ENCODE measurements at regions of chr21 and their contacts with region 1.

Region 1: DNA sequence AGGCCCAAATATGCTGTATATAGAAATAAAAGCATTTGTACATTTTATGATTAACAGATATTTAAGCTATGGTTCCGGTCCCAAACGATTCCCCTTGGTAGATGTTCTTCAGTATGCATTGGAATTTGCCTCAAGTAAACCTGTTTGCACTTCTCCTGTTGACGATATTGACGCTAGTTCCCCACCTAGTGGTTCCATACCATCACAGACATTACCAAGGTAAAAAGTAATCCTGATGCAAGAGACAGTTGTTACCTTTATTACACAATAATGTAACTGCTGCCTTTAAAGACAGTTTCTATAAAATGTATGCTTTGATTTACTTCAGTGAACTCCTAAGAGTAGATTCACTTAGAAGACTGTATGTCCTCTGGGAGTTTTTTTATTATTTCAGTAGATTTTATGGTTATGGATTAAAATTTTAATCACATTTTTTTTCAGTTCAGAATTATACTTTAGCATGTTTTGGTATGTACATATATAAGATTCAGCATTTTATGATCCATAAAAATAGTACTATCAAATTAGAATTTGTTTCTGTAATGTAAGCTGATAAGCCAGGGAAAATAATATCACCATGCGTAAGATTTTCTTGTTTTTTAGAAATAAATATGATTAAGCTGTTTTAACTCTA is 96.5 kb downstream of the USP25 start:
- DNase-seq: peak; percentile 51
- ATAC-seq: peak; percentile 76
- H3K4me3 ChIP-seq: no peak overlapping the region
- H3K27ac ChIP-seq: no peak overlapping the region
- H3K4me1 ChIP-seq: no peaks in the 10 kb centered on the region
- H3K27me3 ChIP-seq: no peaks in the 10 kb centered on the region
- CTCF ChIP-seq: peak; percentile 10 to 68 (median 65); a peak in 5 of 6 replicates
- POLR2A ChIP-seq: no peak
- RAD21 ChIP-seq: peak; percentile 56

Region 2: GRCh38 chr21:15651172-15651571 is 175.1 kb before region 1 on chr21:
- CTCF ChIA-PET with region 1: no interaction called
- POLR2A ChIA-PET with region 1: no interaction called
- RAD21 ChIA-PET with region 1: no interaction called
- intact Hi-C with region 1: no loop called
- DNase-seq: no peak
- ATAC-seq: no peak
- H3K4me3 ChIP-seq: no peak overlapping the region
- H3K27ac ChIP-seq: no peak overlapping the region
- H3K4me1 ChIP-seq: no peaks in the 10 kb centered on the region
- H3K27me3 ChIP-seq: no peaks in the 10 kb centered on the region
- CTCF ChIP-seq: no peak
- POLR2A ChIP-seq: no peak
- RAD21 ChIP-seq: no peak

Region 3: DNA sequence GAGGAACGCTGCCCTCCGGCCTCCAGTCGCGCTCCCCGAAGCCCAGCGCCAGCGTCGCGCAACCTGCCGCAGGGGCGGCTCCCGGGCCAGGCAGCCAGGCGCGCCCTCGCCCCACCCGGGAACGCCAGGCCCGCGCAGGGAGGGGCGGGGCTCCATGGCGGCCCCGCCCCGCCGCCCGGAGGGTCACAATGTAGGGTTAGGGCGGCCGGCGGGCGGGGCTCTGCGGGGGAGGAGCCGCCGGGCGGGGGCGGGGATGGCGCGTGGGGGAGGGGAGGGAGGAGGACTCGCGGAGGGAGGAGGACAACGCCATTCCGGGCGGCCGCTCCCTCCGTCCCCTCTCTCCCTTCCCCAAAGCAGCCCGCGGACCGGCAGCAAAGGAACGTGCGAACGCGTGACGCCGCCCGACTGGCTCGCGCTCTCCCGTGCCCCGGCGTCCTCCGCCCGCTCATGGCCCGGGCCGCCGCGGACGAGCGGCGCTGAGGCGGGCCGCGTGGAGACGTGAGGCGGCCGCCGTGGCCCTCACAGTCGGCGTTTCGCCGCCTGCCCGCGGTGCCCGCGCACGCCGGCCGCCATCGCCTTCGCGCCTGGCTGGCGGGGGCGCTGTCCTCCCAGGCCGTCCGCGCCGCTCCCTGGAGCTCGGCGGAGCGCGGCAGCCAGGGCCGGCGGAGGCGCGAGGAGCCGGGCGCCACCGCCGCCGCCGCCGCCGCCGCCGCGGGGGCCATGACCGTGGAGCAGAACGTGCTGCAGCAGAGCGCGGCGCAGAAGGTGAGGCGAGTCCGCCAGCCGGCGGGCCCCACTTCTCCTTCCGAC is 96.4 kb before region 1 on chr21 and contains the start of gene USP25:
- CTCF ChIA-PET with region 1: no interaction called
- POLR2A ChIA-PET with region 1: no interaction called
- RAD21 ChIA-PET with region 1: no interaction called
- intact Hi-C with region 1: loop called (anchors 10 kb)
- DNase-seq: peak; percentile 43
- ATAC-seq: peak; percentile 95
- H3K4me3 ChIP-seq: peak within 1 kb of the TSS; percentile 59 to 76
- H3K27ac ChIP-seq: peak within 1 kb of the TSS; percentile 94
- H3K4me1 ChIP-seq: peaks cover 27 to 28% of the 10 kb centered on the region in 2 experiments
- H3K27me3 ChIP-seq: no peaks in the 10 kb centered on the region
- CTCF ChIP-seq: no peak
- POLR2A ChIP-seq: peak; percentile 78
- RAD21 ChIP-seq: no peak
- total RNA-seq, gene USP25: 33.6 TPM

Region 4: DNA sequence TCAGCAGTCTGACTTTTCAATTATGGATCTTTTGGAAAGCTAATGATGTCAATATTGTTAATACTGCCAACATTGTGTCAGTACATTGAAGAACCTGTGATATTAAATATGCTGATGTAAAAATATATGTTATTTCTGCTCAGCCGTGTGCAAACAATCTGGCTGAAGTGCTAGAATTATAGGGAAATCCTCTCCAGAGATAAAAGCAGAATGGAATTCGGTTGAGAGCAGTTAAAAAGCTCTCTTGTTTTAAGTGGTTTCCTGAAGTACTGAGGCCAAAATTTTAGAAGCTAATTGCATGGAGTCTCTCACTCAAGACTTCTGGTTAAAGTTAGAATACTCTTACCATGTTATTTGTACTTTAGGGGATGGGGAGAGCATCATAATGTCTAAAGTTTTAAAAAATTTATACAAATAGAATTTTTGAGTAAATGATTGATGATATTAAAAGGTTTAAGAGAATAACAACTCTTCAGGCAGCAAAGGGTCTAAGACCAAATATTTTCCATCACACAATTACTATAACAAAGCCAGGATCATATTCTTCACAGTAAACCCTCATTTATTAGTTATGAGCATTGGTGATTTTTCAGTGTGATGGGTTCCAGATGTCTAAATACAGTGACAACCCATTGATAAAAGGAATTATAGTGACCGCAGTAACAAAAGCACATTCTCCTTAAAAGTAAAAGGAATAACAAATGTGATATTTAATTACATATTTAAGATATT is 852.3 kb after region 1 on chr21:
- CTCF ChIA-PET with region 1: no interaction called
- POLR2A ChIA-PET with region 1: no interaction called
- RAD21 ChIA-PET with region 1: no interaction called
- intact Hi-C with region 1: no loop called
- DNase-seq: no peak
- ATAC-seq: no peak
- H3K4me3 ChIP-seq: no peak overlapping the region
- H3K27ac ChIP-seq: no peak overlapping the region
- H3K4me1 ChIP-seq: no peaks in the 10 kb centered on the region
- H3K27me3 ChIP-seq: no peaks in the 10 kb centered on the region
- CTCF ChIP-seq: no peak
- POLR2A ChIP-seq: no peak
- RAD21 ChIP-seq: no peak